H1 (cell line): ENCODE measurements at regions of chr3 and their contacts with region 1.

Region 1: DNA sequence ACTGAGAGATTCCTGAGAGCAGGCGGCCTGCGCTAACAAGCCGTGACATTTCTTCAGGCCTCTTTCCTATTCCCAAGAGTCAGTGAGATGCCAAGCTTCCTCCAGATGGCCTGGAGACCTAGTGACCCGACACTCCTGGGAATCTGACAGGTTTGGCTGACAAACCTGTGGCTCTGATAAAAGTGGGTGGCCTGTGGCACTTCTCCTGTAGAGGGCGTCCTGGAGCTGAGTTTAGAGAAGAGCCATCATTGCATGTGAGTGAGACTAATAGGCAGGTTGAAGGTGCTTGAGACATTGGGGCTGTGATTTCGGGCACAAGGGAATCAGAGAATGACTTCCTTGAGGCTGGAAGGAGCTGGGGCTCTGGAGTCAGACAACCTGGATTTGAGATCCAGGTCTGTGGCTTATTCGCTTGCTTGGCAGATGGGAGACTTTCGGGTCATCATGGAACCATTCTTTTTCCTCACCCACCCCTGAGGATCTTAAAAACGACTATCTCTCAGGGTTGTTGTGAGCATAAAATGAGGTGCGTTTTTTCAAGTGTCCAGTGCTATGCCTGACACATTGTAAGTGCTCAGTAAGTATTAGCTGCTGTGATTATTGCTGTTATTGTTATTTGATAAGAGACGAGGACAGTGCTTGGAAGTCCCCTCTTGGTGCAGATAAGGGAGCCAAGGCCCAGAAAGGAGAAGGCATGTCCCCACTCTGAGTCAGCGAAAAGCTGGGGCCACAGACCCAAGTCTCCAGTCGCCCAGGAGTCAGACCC is 77.2 kb downstream of the SCN10A start:
- DNase-seq: peak; percentile 68 to 94
- H3K4me3 ChIP-seq: no peak overlapping the region
- H3K27ac ChIP-seq: no peak overlapping the region
- H3K4me1 ChIP-seq: peaks cover 0 to 3% (median 0%) of the 10 kb centered on the region in 4 experiments; a peak in 1 of 7 replicates
- H3K27me3 ChIP-seq: no peaks in the 10 kb centered on the region
- CTCF ChIP-seq: peak; percentile 75 to 98 (median 93)
- EP300 ChIP-seq: no peak
- POLR2A ChIP-seq: no peak
- RAD21 ChIP-seq: peak; percentile 88 to 93

Region 2: GRCh38 chr3:38317155-38317759 is 421.6 kb before region 1 on chr3:
- CTCF ChIA-PET with region 1: no interaction called
- POLR2A ChIA-PET with region 1: no interaction called
- DNase-seq: peak in 1 of 2 experiments; percentile 22
- H3K4me3 ChIP-seq: no peak overlapping the region
- H3K27ac ChIP-seq: no peak overlapping the region
- H3K4me1 ChIP-seq: peaks cover 0 to 4% (median 0%) of the 10 kb centered on the region in 4 experiments; a peak in 2 of 7 replicates
- H3K27me3 ChIP-seq: no peaks in the 10 kb centered on the region
- CTCF ChIP-seq: no peak
- EP300 ChIP-seq: no peak
- POLR2A ChIP-seq: no peak
- RAD21 ChIP-seq: no peak

Region 3: GRCh38 chr3:38446085-38446686 is 292.6 kb before region 1 on chr3:
- CTCF ChIA-PET with region 1: no interaction called
- POLR2A ChIA-PET with region 1: no interaction called
- DNase-seq: no peak
- H3K4me3 ChIP-seq: no peak overlapping the region
- H3K27ac ChIP-seq: no peak overlapping the region
- H3K4me1 ChIP-seq: no peaks in the 10 kb centered on the region
- H3K27me3 ChIP-seq: no peaks in the 10 kb centered on the region
- CTCF ChIP-seq: no peak
- EP300 ChIP-seq: no peak
- POLR2A ChIP-seq: no peak
- RAD21 ChIP-seq: no peak

Region 4: GRCh38 chr3:38689774-38690173 is 49.0 kb before region 1 on chr3:
- CTCF ChIA-PET with region 1: interaction called, 18 read pairs
- POLR2A ChIA-PET with region 1: no interaction called
- DNase-seq: no peak
- H3K4me3 ChIP-seq: no peak overlapping the region
- H3K27ac ChIP-seq: no peak overlapping the region
- H3K4me1 ChIP-seq: no peaks in the 10 kb centered on the region
- H3K27me3 ChIP-seq: no peaks in the 10 kb centered on the region
- CTCF ChIP-seq: no peak
- EP300 ChIP-seq: no peak
- POLR2A ChIP-seq: no peak
- RAD21 ChIP-seq: no peak

Region 5: DNA sequence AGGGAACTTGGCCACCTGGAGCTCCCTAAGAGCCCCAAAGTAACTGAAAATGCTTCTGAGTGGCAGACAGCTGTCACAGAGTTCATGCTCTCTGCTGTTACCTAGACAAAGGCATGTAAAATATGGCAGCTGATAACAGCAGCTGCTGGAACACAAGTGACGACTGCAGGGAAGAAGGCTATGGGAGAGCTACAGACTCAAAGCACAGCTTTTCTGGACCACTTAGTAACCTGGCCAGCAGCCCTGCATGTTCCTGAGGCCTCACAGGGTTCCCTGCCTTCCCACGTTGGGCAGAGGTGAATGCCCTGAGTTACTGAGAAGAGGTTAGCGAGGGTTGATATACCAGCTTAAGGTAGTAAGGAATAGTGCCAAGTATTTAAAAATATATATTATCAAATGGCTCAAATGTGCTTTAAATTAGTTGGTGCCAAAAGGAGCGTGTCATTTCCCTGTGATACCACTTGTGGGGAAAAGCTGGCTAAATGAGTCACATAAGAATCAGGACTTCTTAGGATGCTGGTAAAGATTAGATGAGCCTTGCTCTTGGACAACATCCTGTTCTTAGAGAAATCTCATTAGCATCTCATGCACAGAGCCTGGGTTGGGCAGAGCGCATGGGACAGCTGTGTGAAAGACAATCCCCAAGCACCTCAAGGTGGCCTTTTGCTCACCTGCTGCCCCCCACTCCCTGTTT is 12.9 kb before region 1 on chr3:
- CTCF ChIA-PET with region 1: interaction called, 80 read pairs
- POLR2A ChIA-PET with region 1: interaction called, 4 read pairs
- DNase-seq: no peak
- H3K4me3 ChIP-seq: no peak overlapping the region
- H3K27ac ChIP-seq: no peak overlapping the region
- H3K4me1 ChIP-seq: peaks cover 0 to 6% (median 1%) of the 10 kb centered on the region in 4 experiments; a peak in 4 of 7 replicates
- H3K27me3 ChIP-seq: no peaks in the 10 kb centered on the region
- CTCF ChIP-seq: no peak
- EP300 ChIP-seq: no peak
- POLR2A ChIP-seq: no peak
- RAD21 ChIP-seq: no peak

Region 6: GRCh38 chr3:38758557-38758956 is 19.7 kb after region 1 on chr3:
- CTCF ChIA-PET with region 1: interaction called, 18 read pairs
- POLR2A ChIA-PET with region 1: no interaction called
- DNase-seq: no peak
- H3K4me3 ChIP-seq: no peak overlapping the region
- H3K27ac ChIP-seq: no peak overlapping the region
- H3K4me1 ChIP-seq: no peaks in the 10 kb centered on the region
- H3K27me3 ChIP-seq: no peaks in the 10 kb centered on the region
- CTCF ChIP-seq: no peak
- EP300 ChIP-seq: no peak
- POLR2A ChIP-seq: no peak
- RAD21 ChIP-seq: no peak

Region 7: GRCh38 chr3:38843898-38844297 is 105.1 kb after region 1 on chr3:
- CTCF ChIA-PET with region 1: interaction called, 56 read pairs
- POLR2A ChIA-PET with region 1: no interaction called
- DNase-seq: no peak
- H3K4me3 ChIP-seq: no peak overlapping the region
- H3K27ac ChIP-seq: no peak overlapping the region
- H3K4me1 ChIP-seq: no peaks in the 10 kb centered on the region
- H3K27me3 ChIP-seq: no peaks in the 10 kb centered on the region; a peak in 1 of 7 replicates
- CTCF ChIP-seq: peak in 2 of 3 experiments; percentile 48 to 51; a peak in 2 of 4 replicates
- EP300 ChIP-seq: no peak
- POLR2A ChIP-seq: no peak
- RAD21 ChIP-seq: peak; percentile 75 to 82

Region 8: GRCh38 chr3:38916706-38917105 is 177.9 kb after region 1 on chr3:
- CTCF ChIA-PET with region 1: no interaction called
- POLR2A ChIA-PET with region 1: no interaction called
- DNase-seq: no peak
- H3K4me3 ChIP-seq: no peak overlapping the region
- H3K27ac ChIP-seq: no peak overlapping the region
- H3K4me1 ChIP-seq: no peaks in the 10 kb centered on the region
- H3K27me3 ChIP-seq: no peaks in the 10 kb centered on the region
- CTCF ChIP-seq: no peak
- EP300 ChIP-seq: no peak
- POLR2A ChIP-seq: no peak
- RAD21 ChIP-seq: no peak

Region 9: DNA sequence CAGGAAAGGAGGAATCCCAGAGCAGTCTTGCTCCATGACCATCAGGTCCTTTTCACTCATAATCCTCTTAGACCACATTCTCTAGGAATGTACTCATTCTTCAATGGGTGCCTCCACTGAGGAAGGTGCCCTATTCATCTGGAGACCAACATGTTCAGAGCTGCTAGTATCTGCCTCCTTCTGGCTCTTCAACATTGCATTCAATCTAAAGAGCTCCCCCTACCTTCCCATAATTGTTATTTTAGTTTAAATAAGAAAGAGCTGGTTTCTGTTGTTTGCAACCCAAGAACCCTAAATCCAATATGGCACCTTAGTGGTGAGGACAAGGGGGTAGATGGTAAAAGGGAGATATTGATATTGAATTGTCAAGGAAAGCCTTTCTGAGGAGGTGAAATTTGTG is 245.3 kb after region 1 on chr3:
- CTCF ChIA-PET with region 1: no interaction called
- POLR2A ChIA-PET with region 1: no interaction called
- DNase-seq: no peak
- H3K4me3 ChIP-seq: no peak overlapping the region
- H3K27ac ChIP-seq: no peak overlapping the region
- H3K4me1 ChIP-seq: no peaks in the 10 kb centered on the region
- H3K27me3 ChIP-seq: no peaks in the 10 kb centered on the region
- CTCF ChIP-seq: no peak
- EP300 ChIP-seq: no peak
- POLR2A ChIP-seq: no peak
- RAD21 ChIP-seq: no peak

Region 10: DNA sequence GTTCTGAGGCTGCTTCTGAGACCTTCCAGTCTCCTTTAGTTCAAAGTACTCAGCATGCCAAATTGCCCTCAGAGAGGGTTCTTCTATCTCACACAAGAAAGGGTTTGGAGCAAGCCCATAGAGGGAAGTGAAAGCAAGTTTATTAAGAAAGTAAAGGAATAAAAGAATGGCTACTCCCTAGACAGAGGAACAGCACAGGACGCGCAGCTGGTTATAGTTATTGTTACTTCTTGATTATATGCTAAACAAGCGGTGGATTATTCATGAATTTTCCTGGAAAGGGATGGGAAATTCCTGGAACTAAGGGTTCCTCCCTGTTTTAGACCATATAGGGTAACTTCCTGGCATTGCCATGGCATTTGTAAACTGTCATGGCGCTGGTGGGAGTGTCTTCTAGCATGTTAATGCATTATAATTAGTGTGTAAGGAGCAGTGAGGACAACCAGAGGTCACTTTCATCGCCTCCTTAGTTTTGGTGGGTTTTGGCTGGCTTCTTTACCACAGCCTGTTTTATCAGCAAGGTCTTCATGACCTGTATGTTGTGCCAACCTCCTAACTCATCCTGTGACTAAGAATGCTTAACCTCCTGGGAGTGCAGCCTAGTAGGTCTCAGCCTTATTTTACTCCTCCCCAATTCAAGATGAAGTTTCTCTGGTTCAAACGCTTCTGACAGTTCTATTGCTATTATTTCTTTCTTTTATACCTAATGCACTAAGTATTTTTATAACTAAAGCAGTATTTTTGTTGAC is 286.6 kb after region 1 on chr3:
- CTCF ChIA-PET with region 1: interaction called, 11 read pairs
- POLR2A ChIA-PET with region 1: no interaction called
- DNase-seq: no peak
- H3K4me3 ChIP-seq: no peak overlapping the region
- H3K27ac ChIP-seq: no peak overlapping the region
- H3K4me1 ChIP-seq: no peaks in the 10 kb centered on the region
- H3K27me3 ChIP-seq: no peaks in the 10 kb centered on the region
- CTCF ChIP-seq: no peak
- EP300 ChIP-seq: no peak
- POLR2A ChIP-seq: no peak
- RAD21 ChIP-seq: no peak